HEK293 (cell line): ENCODE measurements at regions of chr17 and their contacts with region 1.

Region 1: GRCh38 chr17:17141860-17142552 is 64.1 kb downstream of the PLD6 start:
- H3K4me3 ChIP-seq: no peak overlapping the region
- H3K27ac ChIP-seq: no peak overlapping the region
- H3K4me1 ChIP-seq: no peaks in the 10 kb centered on the region
- CTCF ChIP-seq: peak; percentile 79

Region 2: DNA sequence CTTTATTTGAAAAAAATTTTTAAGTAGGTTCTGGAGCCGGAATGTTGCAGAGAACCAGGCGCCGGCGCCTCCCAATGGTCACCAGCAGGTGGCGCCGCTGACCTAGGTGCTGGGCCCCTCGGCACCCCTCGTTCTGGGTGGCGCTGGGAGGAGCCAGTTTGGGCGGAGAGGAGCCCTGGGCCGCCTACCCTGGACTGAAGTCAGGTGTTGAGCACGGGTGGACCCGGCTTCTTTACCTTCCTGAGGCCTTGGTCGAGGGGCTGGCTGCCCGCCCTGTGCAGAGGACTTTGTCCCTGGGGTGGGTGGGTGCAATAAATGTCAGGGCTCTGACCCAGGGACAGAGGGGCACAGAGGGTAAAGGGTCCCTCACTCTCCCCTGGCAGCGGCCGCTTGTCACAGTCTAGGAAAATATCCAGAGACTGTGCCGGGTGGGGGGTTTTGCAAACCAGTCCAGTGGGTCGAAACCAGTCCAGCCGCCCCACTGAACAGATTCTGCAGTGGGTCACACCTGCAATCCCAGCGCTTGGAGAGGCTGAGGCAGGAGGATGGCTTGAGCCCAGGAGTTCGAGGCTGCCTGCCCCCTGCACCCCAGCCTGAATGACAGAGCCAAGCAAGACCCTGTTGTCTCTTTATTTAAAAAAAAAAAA is 140.0 kb before region 1 on chr17:
- CTCF ChIA-PET with region 1: interaction called, 11 read pairs
- POLR2A ChIA-PET with region 1: no interaction called
- H3K4me3 ChIP-seq: no peak overlapping the region
- H3K27ac ChIP-seq: no peak overlapping the region
- H3K4me1 ChIP-seq: no peaks in the 10 kb centered on the region; the same call in 1 of the 2 replicates
- CTCF ChIP-seq: peak; percentile 86

Region 3: DNA sequence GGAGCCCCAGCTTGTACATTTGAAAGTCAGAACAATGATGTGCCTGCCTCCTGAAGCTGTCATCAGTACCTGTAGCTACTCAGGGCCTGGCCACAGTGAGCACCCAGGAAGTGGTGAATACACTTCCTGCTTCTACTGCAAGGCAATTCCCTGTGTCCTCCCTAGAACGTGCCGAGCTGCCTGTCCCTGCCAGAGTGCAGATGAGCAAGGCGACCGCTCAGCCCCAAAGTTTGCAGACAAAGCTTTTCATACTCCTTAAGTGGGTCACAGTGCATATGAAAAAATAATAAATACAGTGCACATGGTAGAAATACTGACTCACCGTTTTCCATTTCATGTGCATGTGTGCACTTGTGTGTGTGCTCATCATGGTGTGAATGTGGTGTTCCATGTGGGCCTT is 22.5 kb before region 1 on chr17:
- CTCF ChIA-PET with region 1: interaction called, 20 read pairs
- POLR2A ChIA-PET with region 1: no interaction called
- H3K4me3 ChIP-seq: no peak overlapping the region
- H3K27ac ChIP-seq: no peak overlapping the region
- H3K4me1 ChIP-seq: 0 out of 2 replicates have a peak, but pooled peaks cover 4% of the 10 kb centered on the region
- CTCF ChIP-seq: no peak

Region 4: DNA sequence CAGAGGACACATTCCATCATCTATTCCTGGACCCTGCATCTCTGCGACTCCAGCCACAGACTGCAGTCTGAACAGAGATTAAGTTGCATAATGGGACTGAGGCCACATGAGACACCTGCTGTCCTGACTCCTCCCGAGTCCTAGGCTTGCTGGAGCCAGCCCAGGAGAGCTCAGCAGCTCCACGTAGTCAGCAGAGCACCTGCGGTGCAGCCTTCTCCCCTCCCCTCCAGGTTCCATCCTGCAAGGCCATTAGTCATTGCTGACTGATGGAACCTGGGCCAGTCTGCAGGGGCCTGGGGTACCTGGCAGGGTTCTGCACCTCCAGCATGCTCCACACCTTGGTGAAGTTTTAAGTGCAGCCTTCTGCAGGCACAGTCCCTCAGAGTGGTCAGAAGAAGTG is 12.5 kb before region 1 on chr17:
- CTCF ChIA-PET with region 1: interaction called, 20 read pairs
- POLR2A ChIA-PET with region 1: no interaction called
- H3K4me3 ChIP-seq: no peak overlapping the region
- H3K27ac ChIP-seq: no peak overlapping the region
- H3K4me1 ChIP-seq: no peaks in the 10 kb centered on the region
- CTCF ChIP-seq: no peak

Region 5: GRCh38 chr17:17313350-17313991 is 171.5 kb after region 1 on chr17:
- CTCF ChIA-PET with region 1: interaction called, 11 read pairs
- POLR2A ChIA-PET with region 1: no interaction called
- H3K4me3 ChIP-seq: no peak overlapping the region
- H3K27ac ChIP-seq: no peak overlapping the region
- H3K4me1 ChIP-seq: peaks cover 4% of the 10 kb centered on the region
- CTCF ChIP-seq: no peak; the same call in 1 of the 2 replicates